ENCODE measurements at regions of chr12 and their contacts with region 1.

Region 1: DNA sequence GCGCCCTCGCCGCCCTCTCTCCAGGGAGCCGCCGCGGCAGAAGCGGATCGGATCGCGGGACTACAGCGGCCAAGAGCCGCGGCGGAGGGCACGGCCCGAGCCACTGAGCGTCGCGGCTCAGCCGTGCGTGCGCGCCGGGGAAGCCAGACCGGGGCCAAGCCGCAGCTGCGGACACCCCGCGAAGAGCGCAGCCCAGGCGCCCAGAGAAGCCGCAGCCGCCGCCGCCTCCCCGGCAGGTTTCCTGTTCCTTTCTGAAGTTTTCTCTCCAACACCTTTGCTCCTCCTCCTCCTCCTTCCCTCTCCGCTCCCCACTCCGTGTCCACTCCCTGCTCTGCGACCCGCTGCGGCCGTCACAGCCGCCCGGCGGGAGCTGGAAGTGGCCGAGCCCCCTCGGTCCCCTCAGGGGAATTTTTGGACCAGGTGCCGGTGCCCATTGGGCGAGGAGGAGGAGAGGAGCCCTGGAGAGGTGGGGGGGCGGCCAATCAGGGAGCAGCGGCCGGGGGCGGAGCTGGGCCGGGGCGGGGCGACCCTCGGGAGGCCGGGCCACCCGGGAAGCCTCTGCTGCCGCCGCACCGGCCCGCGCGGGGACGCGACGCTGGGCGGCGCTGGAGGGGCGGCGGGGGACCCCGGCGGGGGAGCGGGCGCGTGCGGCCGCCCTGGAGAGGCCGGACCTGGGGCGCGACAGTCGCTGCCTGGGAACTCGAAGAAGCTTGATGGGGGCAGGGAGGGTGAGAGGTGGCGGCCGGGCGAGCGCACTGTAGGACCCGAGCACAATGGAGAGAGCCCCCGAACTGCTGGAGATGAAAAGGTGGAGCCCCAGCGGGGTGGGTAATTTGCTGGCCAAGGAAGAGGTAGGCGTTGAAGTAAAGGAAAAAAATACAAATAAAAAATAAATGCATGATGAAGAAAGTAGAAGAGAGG is at the start of gene ITPR2:
- DNase-seq: peak; percentile 95
- H3K4me3 ChIP-seq: peak within 1 kb of the TSS; percentile 86
- H3K27ac ChIP-seq: peak within 1 kb of the TSS; percentile 73
- H3K4me1 ChIP-seq: peaks cover 46% of the 10 kb centered on the region
- CTCF ChIP-seq: peak; percentile 41
- total RNA-seq, gene ITPR2: 25.6 and 33.7 TPM in 2 replicates

Region 2: DNA sequence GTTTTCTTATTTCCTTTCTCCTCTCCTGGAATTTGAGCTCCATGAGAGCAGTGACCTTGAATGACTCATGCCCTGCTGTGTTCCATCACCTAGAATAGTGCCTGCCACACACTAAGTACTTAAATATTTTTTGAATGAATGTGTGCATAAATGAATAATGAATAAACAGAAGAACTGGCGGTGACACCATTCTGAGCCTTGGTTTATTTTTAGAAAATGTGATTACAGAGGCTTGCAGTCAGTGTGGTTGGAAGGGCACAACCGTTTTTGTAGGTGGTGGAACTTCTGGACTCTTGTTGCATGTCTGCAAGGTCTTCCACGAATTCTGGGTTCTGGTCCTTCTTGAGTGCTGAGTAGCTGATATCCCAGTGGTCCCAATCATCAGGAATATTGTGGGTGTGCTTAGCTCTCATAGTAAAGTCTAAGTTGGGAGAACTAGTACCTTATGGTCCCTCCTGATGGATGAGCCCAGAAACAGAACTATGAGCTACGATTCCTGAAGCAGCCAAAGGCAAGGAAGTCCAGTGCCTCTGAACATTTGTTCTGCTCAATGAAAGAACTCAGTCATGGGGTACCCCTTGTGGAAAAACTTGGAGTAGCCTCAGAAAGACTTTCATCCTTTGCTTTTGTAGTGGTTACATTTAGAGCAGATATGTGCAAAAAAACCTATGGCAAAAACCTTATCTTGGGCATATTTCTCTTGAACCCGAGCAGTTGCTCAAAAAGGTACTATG is 679.5 kb before region 1 on chr12:
- CTCF ChIA-PET with region 1: no interaction called
- POLR2A ChIA-PET with region 1: no interaction called
- intact Hi-C with region 1: loop called (anchors 10 kb)
- DNase-seq: no peak
- H3K4me3 ChIP-seq: no peak overlapping the region
- H3K27ac ChIP-seq: no peak overlapping the region
- H3K4me1 ChIP-seq: peaks cover 22% of the 10 kb centered on the region
- CTCF ChIP-seq: no peak

Region 3: GRCh38 chr12:26633591-26634210 is 199.4 kb before region 1 on chr12:
- CTCF ChIA-PET with region 1: no interaction called
- POLR2A ChIA-PET with region 1: no interaction called
- intact Hi-C with region 1: no loop called
- DNase-seq: no peak
- H3K4me3 ChIP-seq: no peak overlapping the region
- H3K27ac ChIP-seq: no peak overlapping the region
- H3K4me1 ChIP-seq: no peaks in the 10 kb centered on the region
- CTCF ChIP-seq: no peak

Region 4: GRCh38 chr12:26845057-26845666 is 12.1 kb after region 1 on chr12:
- CTCF ChIA-PET with region 1: interaction called, 11 read pairs
- POLR2A ChIA-PET with region 1: interaction called, 40 read pairs
- intact Hi-C with region 1: loop called (anchors 1 kb)
- DNase-seq: no peak
- H3K4me3 ChIP-seq: no peak overlapping the region
- H3K27ac ChIP-seq: peak overlapping the region; percentile 96
- H3K4me1 ChIP-seq: peaks cover 73% of the 10 kb centered on the region
- CTCF ChIP-seq: peak; percentile 71

Region 5: DNA sequence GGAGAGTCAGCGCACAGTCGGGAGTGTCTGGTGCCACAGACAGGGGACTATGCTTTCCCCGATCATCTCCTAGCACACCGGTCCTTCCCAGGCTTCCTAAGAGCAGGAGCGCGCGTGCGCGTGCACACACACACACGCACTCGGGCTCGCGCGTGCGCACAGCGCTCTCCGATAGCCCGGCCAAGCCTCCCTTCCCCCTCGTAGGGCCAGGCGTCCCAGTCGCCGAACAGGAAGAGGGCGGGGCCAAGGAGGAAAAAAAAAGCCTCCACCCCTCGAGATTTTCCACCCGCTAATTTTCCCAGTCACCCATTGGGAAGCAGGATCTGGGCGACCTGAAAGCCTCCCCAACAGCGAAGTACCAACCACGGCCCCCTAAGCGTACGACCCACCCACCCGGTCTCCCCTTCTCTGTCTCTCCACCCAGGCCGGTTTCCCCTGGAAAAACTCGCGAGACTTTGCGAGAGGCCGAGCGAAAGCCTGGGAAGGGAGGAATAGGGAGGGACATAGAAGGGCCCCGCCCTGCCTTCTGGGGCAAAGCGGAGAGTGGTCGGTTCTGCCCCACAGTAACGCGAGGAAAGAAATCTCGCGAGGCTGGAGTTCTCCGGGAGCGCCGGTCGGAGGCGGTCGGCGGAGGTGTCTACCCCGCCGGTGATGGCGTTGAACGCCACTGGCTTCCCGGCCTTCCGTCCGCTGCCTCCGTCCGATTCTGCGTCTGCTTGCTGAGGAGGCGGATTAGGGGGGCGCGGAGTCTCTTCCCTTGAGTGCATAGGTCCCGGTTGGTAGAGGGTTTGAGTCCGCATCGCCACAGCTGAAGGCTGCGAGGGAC is 105.0 kb after region 1 on chr12 and contains the starts of genes FGFR1OP2 and INTS13:
- CTCF ChIA-PET with region 1: no interaction called
- POLR2A ChIA-PET with region 1: interaction called, 3 read pairs
- intact Hi-C with region 1: loop called (anchors 1 kb)
- DNase-seq: peak; percentile 98
- H3K4me3 ChIP-seq: peak within 1 kb of the TSS; percentile 89
- H3K27ac ChIP-seq: peak within 1 kb of the TSS; percentile 79
- H3K4me1 ChIP-seq: peaks cover 48% of the 10 kb centered on the region
- CTCF ChIP-seq: no peak
- total RNA-seq, gene FGFR1OP2: 35.0 and 45.0 TPM in 2 replicates
- total RNA-seq, gene INTS13: 33.4 and 34.2 TPM in 2 replicates

Region 6: DNA sequence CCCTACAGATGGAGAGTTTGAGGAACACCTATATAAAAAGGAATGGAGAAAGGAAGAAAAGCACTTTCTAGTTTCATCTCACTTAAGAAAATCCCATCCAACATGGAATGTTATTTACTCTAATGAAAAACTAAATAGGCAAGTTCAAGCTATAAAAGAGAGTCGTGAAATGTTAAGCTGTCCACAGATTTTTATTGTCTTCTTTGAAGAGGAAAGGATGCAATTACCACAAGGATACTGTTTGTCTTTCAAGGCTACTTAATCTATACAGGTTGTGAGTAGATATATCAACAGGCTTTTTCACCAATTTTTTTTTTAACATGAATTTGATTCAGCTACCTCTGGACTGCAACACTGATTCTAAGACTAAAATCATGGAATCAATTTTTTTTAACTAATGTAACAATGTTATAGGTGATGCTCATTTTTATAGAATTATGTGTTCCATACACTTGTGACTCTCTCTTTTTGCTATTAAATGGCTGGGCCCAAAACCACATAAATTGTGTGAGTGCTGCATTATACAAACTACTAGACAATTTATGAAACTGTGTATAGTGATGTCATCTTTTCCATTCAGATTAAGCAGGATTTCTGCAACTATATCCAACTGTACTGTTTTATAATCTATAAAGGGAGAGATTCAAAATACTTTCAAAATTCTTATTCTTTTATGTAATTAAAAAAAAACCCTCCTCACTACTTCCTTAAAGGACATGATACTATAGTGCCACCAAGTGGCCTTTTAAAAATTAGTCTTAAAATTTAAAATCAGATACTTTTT is 472.8 kb after region 1 on chr12:
- CTCF ChIA-PET with region 1: no interaction called
- POLR2A ChIA-PET with region 1: no interaction called
- intact Hi-C with region 1: loop called (anchors 10 kb)
- DNase-seq: peak; percentile 57
- H3K4me3 ChIP-seq: no peak overlapping the region
- H3K27ac ChIP-seq: no peak overlapping the region
- H3K4me1 ChIP-seq: no peaks in the 10 kb centered on the region
- CTCF ChIP-seq: peak; percentile 89

Measured in OCI-LY7 (cell line).